Calu3 (cell line): ENCODE measurements at regions of chr2 and their contacts with region 1.

Region 1: DNA sequence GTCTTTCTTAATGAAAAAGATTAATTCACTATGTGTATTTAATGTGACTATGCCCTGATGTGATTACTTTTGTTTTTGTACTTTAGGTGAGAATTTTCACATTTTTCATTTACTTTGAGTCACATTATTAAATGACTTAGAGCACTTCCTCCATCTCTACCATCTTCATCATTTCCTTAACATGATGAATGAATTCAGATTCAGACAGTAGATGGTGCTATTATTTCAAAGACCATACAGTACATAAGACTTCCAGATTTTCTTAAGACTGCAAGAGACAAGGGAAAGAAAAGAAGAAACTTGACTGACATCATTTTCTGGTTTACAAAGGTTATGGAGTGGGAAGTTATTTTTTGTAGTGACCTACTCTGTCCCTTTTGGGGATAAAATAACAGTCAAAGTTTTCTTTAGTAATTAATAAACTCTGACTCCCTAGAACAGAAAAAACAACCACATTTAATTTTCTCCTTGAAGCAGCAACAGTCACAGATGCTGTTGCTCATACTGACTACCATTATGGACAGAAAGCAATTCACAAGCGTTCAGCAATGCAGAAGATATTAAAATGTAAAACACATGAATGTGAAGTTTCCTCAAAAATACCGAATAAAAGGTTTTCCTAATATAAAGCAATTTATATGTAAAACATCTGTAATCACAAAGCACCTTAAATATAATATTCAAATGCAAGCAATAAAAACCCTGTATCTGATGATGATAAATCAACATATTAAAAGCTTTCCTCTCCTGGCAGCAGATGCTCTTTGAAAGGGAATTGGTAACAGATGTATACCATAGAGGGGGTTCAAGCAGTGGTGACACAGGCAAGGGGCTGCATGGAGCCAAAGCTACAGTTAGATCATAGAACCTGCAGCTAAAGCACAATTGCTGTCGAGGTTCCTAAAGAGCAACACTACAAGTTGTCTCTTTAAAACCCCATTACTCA is 1010.9 kb upstream of the NXPH2 start:
- DNase-seq: no peak
- H3K4me3 Mint-ChIP-seq: no peak overlapping the region
- H3K27ac Mint-ChIP-seq: no peak overlapping the region
- H3K4me1 Mint-ChIP-seq: no peaks in the 10 kb centered on the region
- H3K27me3 Mint-ChIP-seq: no peaks in the 10 kb centered on the region
- CTCF ChIP-seq: no peak

Region 2: GRCh38 chr2:139773720-139774277 is 17.3 kb before region 1 on chr2:
- CTCF ChIA-PET with region 1: no interaction called
- intact Hi-C with region 1: no loop called
- DNase-seq: no peak
- H3K4me3 Mint-ChIP-seq: no peak overlapping the region
- H3K27ac Mint-ChIP-seq: no peak overlapping the region
- H3K4me1 Mint-ChIP-seq: no peaks in the 10 kb centered on the region
- H3K27me3 Mint-ChIP-seq: no peaks in the 10 kb centered on the region
- CTCF ChIP-seq: no peak

Region 3: DNA sequence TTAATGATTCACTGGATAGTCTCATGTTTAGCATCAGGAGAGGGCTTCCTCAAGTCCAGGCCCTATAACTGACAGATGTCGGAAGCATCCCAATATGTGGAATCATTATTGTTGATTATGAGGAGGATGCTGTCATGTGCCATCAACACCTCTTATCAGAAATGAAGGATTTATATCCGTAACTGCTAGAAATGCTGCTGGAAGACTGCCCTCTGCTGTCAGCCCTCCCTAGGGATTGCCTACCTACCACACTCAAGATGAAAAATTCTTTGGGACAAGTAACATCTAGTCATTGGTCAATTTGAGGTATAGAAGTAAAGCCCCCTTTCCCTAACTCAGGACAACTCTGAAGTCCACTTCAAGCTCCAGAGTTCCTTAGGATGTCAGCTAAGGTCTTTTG is 155.6 kb after region 1 on chr2:
- CTCF ChIA-PET with region 1: no interaction called
- intact Hi-C with region 1: loop called (anchors 2 kb)
- DNase-seq: peak; percentile 5
- H3K4me3 Mint-ChIP-seq: no peak overlapping the region
- H3K27ac Mint-ChIP-seq: no peak overlapping the region
- H3K4me1 Mint-ChIP-seq: no peaks in the 10 kb centered on the region
- H3K27me3 Mint-ChIP-seq: no peaks in the 10 kb centered on the region
- CTCF ChIP-seq: no peak